Tibial artery (tissue), 4 donors: ENCODE measurements at regions of chr5 and their contacts with region 1.

Region 1: DNA sequence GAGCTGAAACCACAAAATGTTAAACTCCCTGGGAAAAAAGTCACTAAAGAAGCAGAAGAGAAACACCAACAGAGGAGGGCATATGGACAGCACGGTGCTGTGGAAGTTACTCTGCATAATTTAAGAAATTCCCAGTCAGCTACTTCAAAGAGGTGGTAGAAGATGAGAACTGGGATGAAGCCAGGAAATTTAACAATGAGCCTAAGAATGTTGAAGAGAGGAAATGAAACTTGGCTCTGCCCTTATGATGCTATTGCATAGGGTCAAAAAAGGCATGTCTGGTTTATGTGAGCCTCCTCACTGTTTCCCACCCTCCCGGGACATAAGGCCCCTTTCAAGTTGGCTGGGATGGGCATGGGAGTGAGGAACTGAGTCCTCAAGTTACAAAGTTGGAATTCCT is 25.4 kb upstream of the SNX18 start:
- DNase-seq: no peak
- H3K4me3 ChIP-seq: no peak overlapping the region
- H3K27ac ChIP-seq: no peak overlapping the region
- H3K4me1 ChIP-seq: no peaks in the 10 kb centered on the region
- H3K27me3 ChIP-seq: no peaks in the 10 kb centered on the region
- CTCF ChIP-seq: no peak

Region 2: DNA sequence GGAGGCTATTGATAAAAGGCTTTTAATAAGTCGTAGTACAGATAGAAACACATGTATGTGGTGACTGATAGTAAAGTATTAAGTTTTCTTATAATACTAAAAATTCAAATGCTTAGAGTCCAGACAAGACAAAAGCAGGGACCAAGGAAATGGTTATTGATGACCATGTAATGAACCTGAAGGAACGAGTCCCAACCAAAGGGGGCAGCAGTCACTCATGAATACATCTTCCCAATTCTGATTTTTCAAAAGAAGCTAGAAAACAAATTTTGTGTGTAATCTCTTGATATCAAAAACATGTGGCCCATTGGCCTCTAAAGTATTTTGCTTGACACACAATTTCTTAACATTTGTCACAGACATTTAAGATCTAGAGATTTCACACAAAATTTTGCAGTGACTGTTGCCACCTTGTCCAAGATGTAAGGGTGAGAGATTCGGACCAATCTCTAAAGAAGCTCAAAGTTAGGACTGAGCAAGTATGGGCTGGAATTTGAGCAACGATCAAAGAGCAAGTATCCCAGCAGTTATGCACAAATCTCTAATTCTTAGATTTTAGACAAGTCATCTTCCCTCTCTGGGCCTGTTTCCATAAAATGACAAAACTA is 248.6 kb before region 1 on chr5:
- intact Hi-C with region 1: loop called (anchors 10 kb)
- DNase-seq: no peak
- H3K4me3 ChIP-seq: no peak overlapping the region
- H3K27ac ChIP-seq: no peak overlapping the region
- H3K4me1 ChIP-seq: no peaks in the 10 kb centered on the region
- H3K27me3 ChIP-seq: no peaks in the 10 kb centered on the region
- CTCF ChIP-seq: peak; percentile 57 to 69

Region 3: GRCh38 chr5:54329731-54330709 is 162.2 kb before region 1 on chr5:
- intact Hi-C with region 1: loop called (anchors 10 kb)
- DNase-seq: no peak
- H3K4me3 ChIP-seq: no peak overlapping the region
- H3K27ac ChIP-seq: no peak overlapping the region
- H3K4me1 ChIP-seq: peaks cover 0 to 15% (median 0%) of the 10 kb centered on the region in 4 donors
- H3K27me3 ChIP-seq: no peaks in the 10 kb centered on the region
- CTCF ChIP-seq: no peak

Region 4: GRCh38 chr5:54443270-54443669 is 48.9 kb before region 1 on chr5:
- intact Hi-C with region 1: loop called (anchors 5 kb)
- DNase-seq: no peak
- H3K4me3 ChIP-seq: no peak overlapping the region
- H3K27ac ChIP-seq: no peak overlapping the region
- H3K4me1 ChIP-seq: peaks cover 0 to 26% (median 3%) of the 10 kb centered on the region in 4 donors
- H3K27me3 ChIP-seq: no peaks in the 10 kb centered on the region
- CTCF ChIP-seq: peak; percentile 35 to 48

Region 5: GRCh38 chr5:54517174-54518092 is 25.3 kb after region 1 on chr5 and contains the start of gene SNX18:
- intact Hi-C with region 1: no loop called
- DNase-seq: peak; percentile 92 to 95
- H3K4me3 ChIP-seq: peak within 1 kb of the TSS; percentile 86 to 98
- H3K27ac ChIP-seq: peak within 1 kb of the TSS; percentile 92 to 97
- H3K4me1 ChIP-seq: peaks cover 0 to 37% (median 12%) of the 10 kb centered on the region in 4 donors
- H3K27me3 ChIP-seq: no peaks in the 10 kb centered on the region
- CTCF ChIP-seq: peak; percentile 98 to 99